Calu3 (cell line): ENCODE measurements at regions of chr7 and their contacts with region 1.

Region 1: GRCh38 chr7:92633211-92633906 is 43.2 kb upstream of the FAM133B start:
- DNase-seq: peak; percentile 40
- H3K4me3 Mint-ChIP-seq: peak overlapping the region; percentile 36
- H3K27ac Mint-ChIP-seq: peak overlapping the region; percentile 81
- H3K4me1 Mint-ChIP-seq: peaks cover 30% of the 10 kb centered on the region
- H3K27me3 Mint-ChIP-seq: no peaks in the 10 kb centered on the region
- CTCF ChIP-seq: no peak

Region 2: DNA sequence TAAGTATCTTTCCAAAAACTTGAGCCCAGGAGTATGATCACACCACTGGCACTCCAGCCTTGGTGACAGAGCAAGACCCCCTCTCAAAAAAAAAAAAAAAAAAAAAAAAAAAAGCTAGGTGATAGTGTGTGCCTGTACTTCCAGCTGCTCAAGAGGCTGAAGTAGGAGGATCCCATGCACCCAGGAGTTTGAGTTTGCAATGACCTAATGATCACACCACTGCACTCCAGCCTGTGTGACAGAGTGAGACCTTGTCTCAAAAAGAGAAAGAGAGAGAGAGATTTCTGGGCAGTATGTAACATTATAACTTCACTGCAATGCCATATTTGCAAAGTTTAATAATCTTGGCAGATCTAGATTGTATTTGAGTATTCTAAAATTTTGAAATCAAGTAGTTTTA is 645.1 kb before region 1 on chr7:
- CTCF ChIA-PET with region 1: no interaction called
- intact Hi-C with region 1: no loop called
- DNase-seq: no peak
- H3K4me3 Mint-ChIP-seq: no peak overlapping the region
- H3K27ac Mint-ChIP-seq: no peak overlapping the region
- H3K4me1 Mint-ChIP-seq: no peaks in the 10 kb centered on the region
- H3K27me3 Mint-ChIP-seq: no peaks in the 10 kb centered on the region
- CTCF ChIP-seq: no peak

Region 3: GRCh38 chr7:92763636-92764423 is 130.5 kb after region 1 on chr7:
- CTCF ChIA-PET with region 1: no interaction called
- intact Hi-C with region 1: loop called (anchors 5 kb)
- DNase-seq: peak; percentile 66
- H3K4me3 Mint-ChIP-seq: no peak overlapping the region
- H3K27ac Mint-ChIP-seq: peak overlapping the region; percentile 58
- H3K4me1 Mint-ChIP-seq: peaks cover 49% of the 10 kb centered on the region
- H3K27me3 Mint-ChIP-seq: no peaks in the 10 kb centered on the region
- CTCF ChIP-seq: no peak